Activated B cell treated with CpG ODN at 0.5 μM for 24 hours (primary cell): ENCODE measurements at regions of chr3 and their contacts with region 1.

Region 1: DNA sequence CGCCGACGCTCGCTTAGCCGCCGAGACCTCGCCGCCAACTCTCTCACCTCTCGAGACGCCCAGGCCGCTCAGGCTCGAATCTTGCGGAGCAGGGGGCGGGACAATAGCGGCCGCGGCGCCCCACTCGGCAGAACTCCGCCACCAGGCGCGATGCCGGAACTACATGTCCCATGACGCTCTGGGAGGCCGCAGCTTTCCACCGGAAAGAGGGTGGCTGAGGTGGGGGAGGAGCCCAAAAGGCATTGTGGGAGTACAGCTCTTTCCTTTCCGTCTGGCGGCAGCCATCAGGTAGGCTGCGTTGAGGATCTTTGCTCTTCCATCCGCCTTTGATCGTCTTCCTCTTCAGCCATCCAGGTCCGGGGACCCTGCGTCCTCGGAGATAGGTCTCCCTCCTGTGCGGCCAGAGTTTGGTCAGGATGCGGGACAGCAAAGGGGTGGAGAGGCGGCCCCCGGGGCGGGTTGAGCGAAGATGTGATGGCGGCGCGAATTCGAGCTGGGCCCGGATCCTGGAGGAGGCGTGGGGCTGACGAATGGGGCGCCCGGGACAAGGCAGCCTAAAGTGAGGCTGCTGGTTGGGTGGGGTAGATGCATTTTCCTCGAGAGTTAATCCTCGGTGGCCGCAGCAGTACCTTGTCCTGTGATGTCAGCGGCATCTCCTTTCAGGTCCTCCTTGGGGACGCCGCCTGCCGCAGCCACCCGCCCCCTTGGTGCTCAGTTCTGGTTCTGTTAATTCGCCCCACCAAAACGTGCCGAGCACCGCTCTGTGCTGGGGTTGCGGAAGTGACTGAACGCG is at the starts of genes NKIRAS1 and RPL15:
- DNase-seq: peak; percentile 90
- ATAC-seq: peak; percentile 91
- H3K4me3 Mint-ChIP-seq: peak within 1 kb of the TSS; percentile 98
- H3K27ac Mint-ChIP-seq: peak within 1 kb of the TSS; percentile 95
- H3K4me1 Mint-ChIP-seq: peaks cover 52% of the 10 kb centered on the region
- H3K27me3 Mint-ChIP-seq: no peaks in the 10 kb centered on the region
- CTCF ChIP-seq: no peak
- total RNA-seq, gene NKIRAS1: 3.4 and 4.8 TPM in 2 replicates
- total RNA-seq, gene RPL15: 2,710 and 2,947 TPM in 2 replicates

Region 2: DNA sequence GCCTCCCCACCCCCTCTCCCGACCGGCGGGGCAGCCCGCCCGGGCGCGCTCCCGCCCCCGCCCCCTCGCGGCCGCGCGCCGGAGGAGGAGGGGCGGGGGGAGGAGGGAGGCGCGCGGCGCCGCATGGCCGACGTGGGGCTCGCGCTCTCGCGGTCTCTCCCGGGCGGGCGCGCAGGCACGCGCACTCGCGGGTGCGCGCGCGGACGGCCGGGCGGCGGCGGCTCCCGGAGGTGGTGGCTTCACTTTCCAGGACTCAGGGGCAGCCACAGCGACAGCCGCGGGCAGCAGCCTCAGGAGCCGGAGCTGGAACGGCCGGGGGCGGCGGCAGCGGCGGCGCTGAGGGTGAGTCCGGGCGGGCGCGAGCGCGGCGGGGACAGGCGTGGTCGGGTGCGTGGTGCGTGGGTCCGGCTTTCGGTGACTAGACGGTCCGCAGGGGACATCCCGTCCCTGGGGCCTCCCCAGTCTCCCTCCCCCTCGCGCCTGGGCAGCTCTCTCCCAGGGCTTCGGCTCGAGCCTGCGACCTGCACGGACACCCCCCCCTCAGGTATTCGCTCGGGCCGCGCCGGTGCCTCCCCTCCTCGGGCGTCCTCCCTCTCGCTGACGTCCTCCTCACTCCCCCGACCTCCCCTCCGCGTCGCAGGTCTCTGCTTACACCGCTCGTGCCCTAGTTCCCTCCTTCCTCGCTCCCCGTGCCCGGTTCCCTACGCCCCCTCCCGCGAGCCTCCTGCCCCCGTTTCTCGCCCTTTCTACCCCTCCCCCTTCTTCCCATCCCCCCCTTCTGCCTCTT is 714.0 kb before region 1 on chr3 and contains the start of gene UBE2E2:
- CTCF ChIA-PET with region 1: no interaction called
- POLR2A ChIA-PET with region 1: no interaction called
- intact Hi-C with region 1: loop called (anchors 2 kb)
- DNase-seq: peak; percentile 82
- ATAC-seq: peak; percentile 73
- H3K4me3 Mint-ChIP-seq: peak within 1 kb of the TSS; percentile 97
- H3K27ac Mint-ChIP-seq: peak within 1 kb of the TSS; percentile 91
- H3K4me1 Mint-ChIP-seq: peaks cover 40% of the 10 kb centered on the region
- H3K27me3 Mint-ChIP-seq: no peaks in the 10 kb centered on the region
- CTCF ChIP-seq: no peak
- total RNA-seq, gene UBE2E2: 47.0 and 48.5 TPM in 2 replicates

Region 3: GRCh38 chr3:23480329-23480714 is 436.8 kb before region 1 on chr3:
- CTCF ChIA-PET with region 1: no interaction called
- POLR2A ChIA-PET with region 1: no interaction called
- intact Hi-C with region 1: no loop called
- DNase-seq: no peak
- ATAC-seq: no peak
- H3K4me3 Mint-ChIP-seq: no peak overlapping the region
- H3K27ac Mint-ChIP-seq: no peak overlapping the region
- H3K4me1 Mint-ChIP-seq: peaks cover 19% of the 10 kb centered on the region
- H3K27me3 Mint-ChIP-seq: no peaks in the 10 kb centered on the region
- CTCF ChIP-seq: no peak

Region 4: DNA sequence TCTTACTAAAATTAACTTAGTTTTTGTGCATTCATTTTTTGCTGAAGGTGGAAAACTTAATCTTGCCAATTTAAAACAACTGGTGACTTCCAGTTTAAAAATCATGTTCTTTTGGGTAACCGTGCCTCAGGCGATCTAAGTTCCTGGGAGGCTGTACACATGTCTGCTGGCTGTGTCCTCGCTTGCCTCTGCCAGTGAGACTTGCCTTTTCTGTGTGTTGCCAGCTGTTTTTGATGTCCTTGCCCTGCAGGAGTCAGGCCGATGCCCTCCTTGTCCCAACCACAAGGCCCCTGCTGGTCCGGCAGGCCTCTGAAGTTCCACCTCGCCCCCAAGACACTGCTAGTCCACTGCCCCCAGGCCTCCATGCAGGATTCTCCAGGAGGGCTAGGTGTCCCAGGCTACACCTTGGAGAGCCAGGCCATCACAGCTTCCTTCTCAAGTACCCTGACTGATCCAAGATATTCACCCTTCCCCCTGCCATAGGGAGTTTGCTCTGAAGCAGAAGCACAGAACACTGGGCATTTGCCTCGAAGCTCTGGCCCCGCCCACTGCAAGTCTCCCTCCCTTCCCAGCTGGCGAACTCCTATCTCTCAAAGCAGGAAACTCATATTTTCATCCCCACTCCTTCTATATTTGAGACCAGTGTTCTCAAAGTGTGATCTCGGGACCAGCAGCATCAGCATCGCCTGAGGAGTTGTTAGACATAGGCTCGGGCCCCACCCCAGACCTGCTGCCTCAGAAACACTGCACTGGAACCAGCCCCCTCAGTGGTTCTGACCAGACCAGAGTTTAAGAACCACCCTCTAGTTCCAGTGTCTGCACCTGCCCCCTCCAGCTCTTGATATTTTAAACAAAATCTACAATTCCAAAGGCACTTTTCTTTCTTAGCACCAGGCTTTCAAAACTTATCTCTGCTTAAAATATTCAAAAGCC is 297.1 kb before region 1 on chr3:
- CTCF ChIA-PET with region 1: no interaction called
- POLR2A ChIA-PET with region 1: no interaction called
- intact Hi-C with region 1: no loop called
- DNase-seq: no peak
- ATAC-seq: no peak
- H3K4me3 Mint-ChIP-seq: no peak overlapping the region
- H3K27ac Mint-ChIP-seq: no peak overlapping the region
- H3K4me1 Mint-ChIP-seq: peaks cover 23% of the 10 kb centered on the region
- H3K27me3 Mint-ChIP-seq: no peaks in the 10 kb centered on the region
- CTCF ChIP-seq: no peak

Region 5: GRCh38 chr3:23805633-23806533 is 111.2 kb before region 1 on chr3 and contains the start of gene UBE2E1:
- CTCF ChIA-PET with region 1: interaction called, 4 read pairs
- POLR2A ChIA-PET with region 1: interaction called, 19 read pairs
- intact Hi-C with region 1: loop called (anchors 1 kb)
- DNase-seq: peak; percentile 68
- ATAC-seq: peak; percentile 77
- H3K4me3 Mint-ChIP-seq: peak within 1 kb of the TSS; percentile 97
- H3K27ac Mint-ChIP-seq: peak within 1 kb of the TSS; percentile 97
- H3K4me1 Mint-ChIP-seq: peaks cover 41% of the 10 kb centered on the region
- H3K27me3 Mint-ChIP-seq: no peaks in the 10 kb centered on the region
- CTCF ChIP-seq: no peak
- total RNA-seq, gene UBE2E1: 79.9 and 85.2 TPM in 2 replicates

Region 6: GRCh38 chr3:23834082-23834870 is 82.8 kb before region 1 on chr3:
- CTCF ChIA-PET with region 1: interaction called, 3 read pairs
- POLR2A ChIA-PET with region 1: interaction called, 22 read pairs
- intact Hi-C with region 1: no loop called
- DNase-seq: no peak
- ATAC-seq: no peak
- H3K4me3 Mint-ChIP-seq: no peak overlapping the region
- H3K27ac Mint-ChIP-seq: no peak overlapping the region
- H3K4me1 Mint-ChIP-seq: peaks cover 75% of the 10 kb centered on the region
- H3K27me3 Mint-ChIP-seq: no peaks in the 10 kb centered on the region
- CTCF ChIP-seq: no peak

Region 7: DNA sequence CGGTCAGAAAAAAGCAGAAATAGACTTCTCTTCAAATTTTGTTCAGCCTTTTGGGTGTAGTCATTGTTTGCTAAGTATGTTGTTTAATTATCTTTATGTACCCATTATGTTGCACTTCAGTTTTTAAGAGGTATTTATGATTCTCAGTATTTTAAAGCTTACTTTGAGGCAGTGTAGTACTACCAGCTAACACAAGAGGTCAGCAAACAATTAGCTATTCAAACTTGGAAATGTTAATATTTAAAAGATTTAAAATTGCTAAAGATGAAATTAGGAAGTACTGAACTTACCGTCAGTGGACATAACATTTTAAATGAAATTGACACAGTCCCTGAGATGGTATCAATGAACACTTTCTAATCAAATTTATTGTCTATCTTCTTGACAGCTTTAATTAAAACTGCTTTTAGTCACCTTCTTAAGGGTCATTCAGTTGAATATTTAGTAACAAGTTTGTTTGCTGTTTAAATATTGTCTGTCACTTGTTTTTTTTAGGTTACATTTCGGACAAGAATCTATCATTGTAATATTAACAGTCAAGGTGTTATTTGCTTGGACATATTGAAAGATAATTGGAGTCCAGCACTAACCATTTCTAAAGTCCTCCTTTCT is 28.4 kb before region 1 on chr3:
- CTCF ChIA-PET with region 1: interaction called, 9 read pairs
- POLR2A ChIA-PET with region 1: interaction called, 7 read pairs
- intact Hi-C with region 1: loop called (anchors 1 kb)
- DNase-seq: no peak
- ATAC-seq: peak; percentile 42
- H3K4me3 Mint-ChIP-seq: no peak overlapping the region
- H3K27ac Mint-ChIP-seq: no peak overlapping the region
- H3K4me1 Mint-ChIP-seq: peaks cover 8% of the 10 kb centered on the region
- H3K27me3 Mint-ChIP-seq: no peaks in the 10 kb centered on the region
- CTCF ChIP-seq: peak; percentile 78

Region 8: DNA sequence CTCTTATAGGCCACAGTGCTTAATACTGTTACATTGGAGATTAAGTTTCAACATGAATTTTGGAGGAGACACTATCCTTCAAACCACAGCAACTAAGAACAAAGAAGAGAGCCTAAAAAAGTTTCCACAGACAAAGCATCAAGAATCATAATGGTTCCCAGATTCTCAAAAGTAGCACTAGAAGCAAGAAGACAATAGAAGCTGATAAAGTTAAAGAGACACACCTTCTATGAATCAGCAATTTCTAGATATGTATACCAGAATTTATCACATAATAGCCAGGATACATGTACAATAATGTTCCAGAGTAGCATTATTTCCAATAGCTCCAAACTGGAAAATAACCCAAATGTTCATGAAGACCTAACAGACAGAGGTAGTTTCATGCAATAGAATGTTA is 12.5 kb before region 1 on chr3:
- CTCF ChIA-PET with region 1: no interaction called
- POLR2A ChIA-PET with region 1: no interaction called
- intact Hi-C with region 1: no loop called
- DNase-seq: no peak
- ATAC-seq: no peak
- H3K4me3 Mint-ChIP-seq: no peak overlapping the region
- H3K27ac Mint-ChIP-seq: no peak overlapping the region
- H3K4me1 Mint-ChIP-seq: no peaks in the 10 kb centered on the region
- H3K27me3 Mint-ChIP-seq: no peaks in the 10 kb centered on the region
- CTCF ChIP-seq: no peak

Region 9: DNA sequence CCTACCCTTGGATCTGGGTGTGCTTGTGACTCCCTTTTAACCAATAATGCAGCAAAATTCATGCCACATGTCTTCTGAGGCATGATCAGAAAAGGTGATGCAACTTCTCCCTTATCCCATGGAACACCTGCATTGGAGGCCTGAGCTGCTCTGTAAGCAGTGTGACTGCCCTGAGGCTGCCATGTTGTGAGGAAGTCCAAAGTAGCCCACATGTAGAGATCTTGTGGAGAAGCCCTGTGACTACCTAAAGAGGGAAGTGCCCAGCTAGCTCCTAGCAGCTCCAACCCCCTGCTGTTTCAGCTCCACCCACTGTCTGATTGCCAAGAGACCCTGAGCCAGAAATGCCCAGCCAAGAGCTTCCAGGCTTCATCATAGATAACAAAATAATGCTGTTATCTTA is 21.6 kb after region 1 on chr3:
- CTCF ChIA-PET with region 1: no interaction called
- POLR2A ChIA-PET with region 1: interaction called, 124 read pairs
- intact Hi-C with region 1: no loop called
- DNase-seq: no peak
- ATAC-seq: no peak
- H3K4me3 Mint-ChIP-seq: no peak overlapping the region
- H3K27ac Mint-ChIP-seq: no peak overlapping the region
- H3K4me1 Mint-ChIP-seq: no peaks in the 10 kb centered on the region
- H3K27me3 Mint-ChIP-seq: peaks cover 8% of the 10 kb centered on the region
- CTCF ChIP-seq: no peak

Region 10: DNA sequence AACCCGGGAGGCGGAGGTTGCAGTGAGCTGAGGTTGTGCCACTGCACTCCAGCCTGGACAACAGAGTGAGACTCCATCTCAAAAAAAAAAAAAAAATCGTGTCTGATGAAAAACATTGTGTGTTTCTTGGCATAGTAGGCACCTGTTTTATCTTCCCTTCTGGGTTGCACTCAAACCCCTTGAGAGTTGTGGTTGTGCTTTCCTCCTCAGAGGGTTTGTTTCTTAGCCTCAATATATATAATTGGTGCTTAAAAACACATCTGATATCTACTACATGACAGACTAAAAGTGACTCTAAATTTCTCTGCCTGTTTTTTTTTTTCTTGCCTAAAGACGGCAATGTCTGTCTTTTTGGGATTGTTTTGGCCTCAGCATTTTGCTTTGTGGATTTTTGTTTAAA is 35.6 kb after region 1 on chr3:
- CTCF ChIA-PET with region 1: no interaction called
- POLR2A ChIA-PET with region 1: interaction called, 33 read pairs
- intact Hi-C with region 1: loop called (anchors 1 kb)
- DNase-seq: no peak
- ATAC-seq: peak; percentile 93
- H3K4me3 Mint-ChIP-seq: peak overlapping the region; percentile 69
- H3K27ac Mint-ChIP-seq: peak overlapping the region; percentile 78
- H3K4me1 Mint-ChIP-seq: peaks cover 68% of the 10 kb centered on the region
- H3K27me3 Mint-ChIP-seq: no peaks in the 10 kb centered on the region
- CTCF ChIP-seq: no peak